Astrocyte of the cerebellum (primary cell): ENCODE measurements at regions of chr6 and their contacts with region 1.

Region 1: DNA sequence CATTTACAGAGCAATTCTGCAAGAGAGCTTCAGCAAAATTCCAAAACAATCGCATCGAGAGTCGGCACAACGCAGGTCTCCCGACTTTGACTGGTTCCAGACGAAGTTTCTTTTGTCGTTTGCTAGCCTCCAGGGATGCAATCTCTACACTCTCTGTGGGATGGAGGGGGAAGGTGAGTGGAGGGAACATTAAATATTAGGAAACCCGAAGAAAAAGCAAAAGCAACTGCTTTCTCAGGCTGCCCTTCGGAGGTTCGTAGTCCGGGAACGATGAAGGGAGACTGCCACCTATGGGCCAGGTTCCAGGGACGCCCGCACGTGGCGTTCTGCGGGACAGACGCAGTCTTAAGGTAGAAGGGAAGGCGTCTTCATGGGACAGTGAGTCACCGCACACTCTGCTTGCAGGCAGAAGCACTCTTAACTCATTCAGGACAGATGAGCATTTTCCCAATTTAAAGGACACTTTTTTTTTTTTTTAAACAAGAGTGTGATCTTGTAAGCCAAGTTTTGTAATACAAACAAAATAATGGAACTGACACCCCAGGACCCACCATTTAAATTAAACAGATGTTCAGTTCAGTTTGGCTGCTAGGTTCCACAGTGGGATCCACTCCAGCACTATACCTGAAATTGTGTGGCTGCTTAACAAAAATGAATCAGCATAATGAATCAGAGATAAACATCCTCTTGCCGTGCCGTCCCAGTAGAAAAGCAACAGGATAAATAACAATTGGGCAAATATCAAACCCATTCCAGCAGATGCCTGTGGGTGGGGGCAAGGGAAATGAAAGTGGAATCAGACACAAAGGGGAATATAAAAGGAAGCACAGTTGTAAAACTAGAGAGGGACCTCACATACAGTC is 65.8 kb upstream of the ARMC2 start:
- DNase-seq: peak; percentile 55
- H3K4me3 ChIP-seq: peak overlapping the region; percentile 44
- CTCF ChIP-seq: peak; percentile 78

Region 2: DNA sequence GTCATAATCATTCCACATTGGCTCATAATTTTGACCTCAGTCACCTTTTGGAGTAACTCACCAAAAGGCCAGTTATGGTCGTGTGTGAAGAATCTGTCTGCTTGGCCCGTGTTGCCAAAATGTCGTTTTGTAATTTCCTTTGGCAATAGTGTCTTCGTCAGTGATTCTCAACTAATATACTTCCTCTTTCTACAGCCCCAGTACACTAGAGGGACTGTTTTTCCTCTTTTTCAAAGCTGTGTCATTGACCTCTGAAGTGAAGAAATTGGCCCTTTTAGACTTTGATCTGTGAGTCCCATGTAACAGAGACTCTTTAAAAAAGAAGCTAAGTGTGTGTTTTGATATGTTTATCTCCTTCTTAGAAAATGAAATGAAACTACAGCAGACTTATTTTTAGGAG is 216.5 kb before region 1 on chr6:
- in situ Hi-C with region 1: loop called (anchors 5 kb)
- DNase-seq: no peak
- H3K4me3 ChIP-seq: no peak overlapping the region
- CTCF ChIP-seq: no peak

Region 3: GRCh38 chr6:108721286-108721685 is 61.1 kb before region 1 on chr6:
- in situ Hi-C with region 1: loop called (anchors 5 kb)
- DNase-seq: no peak
- H3K4me3 ChIP-seq: no peak overlapping the region
- CTCF ChIP-seq: no peak

Region 4: GRCh38 chr6:108742041-108742440 is 40.4 kb before region 1 on chr6:
- in situ Hi-C with region 1: no loop called
- DNase-seq: no peak
- H3K4me3 ChIP-seq: no peak overlapping the region
- CTCF ChIP-seq: no peak

Region 5: DNA sequence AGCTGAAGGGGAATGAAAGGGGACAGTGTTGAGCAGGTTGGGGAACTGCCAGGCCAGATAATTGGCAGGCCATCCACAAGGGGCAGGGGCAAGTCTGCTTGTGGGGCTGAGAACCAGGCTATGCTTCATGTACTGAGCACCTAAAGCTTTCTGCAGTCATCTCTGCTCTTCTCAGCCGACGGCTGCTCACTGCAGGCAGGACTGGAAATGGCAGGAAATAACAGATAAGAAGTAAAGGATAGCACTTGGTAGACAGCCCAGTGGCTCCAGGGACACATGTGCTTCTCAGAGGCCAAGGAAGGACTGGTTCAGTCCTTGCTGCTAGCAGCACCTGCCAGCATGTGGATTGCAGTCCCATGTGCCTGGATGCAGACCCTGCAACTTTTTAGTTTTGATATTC is 510.0 kb after region 1 on chr6:
- in situ Hi-C with region 1: no loop called
- DNase-seq: no peak
- H3K4me3 ChIP-seq: no peak overlapping the region
- CTCF ChIP-seq: no peak